Right ventricle myocardium superior (tissue), 1 donor: ENCODE measurements at regions of chr9 and their contacts with region 1.

Region 1: GRCh38 chr9:126690431-126691350 is 77.0 kb downstream of the LMX1B start:
- DNase-seq: peak; percentile 71
- ATAC-seq: peak; percentile 67

Region 2: GRCh38 chr9:126500684-126501382 is 189.9 kb before region 1 on chr9:
- intact Hi-C with region 1: loop called (anchors 10 kb)
- DNase-seq: peak; percentile 86
- ATAC-seq: peak; percentile 88

Region 3: DNA sequence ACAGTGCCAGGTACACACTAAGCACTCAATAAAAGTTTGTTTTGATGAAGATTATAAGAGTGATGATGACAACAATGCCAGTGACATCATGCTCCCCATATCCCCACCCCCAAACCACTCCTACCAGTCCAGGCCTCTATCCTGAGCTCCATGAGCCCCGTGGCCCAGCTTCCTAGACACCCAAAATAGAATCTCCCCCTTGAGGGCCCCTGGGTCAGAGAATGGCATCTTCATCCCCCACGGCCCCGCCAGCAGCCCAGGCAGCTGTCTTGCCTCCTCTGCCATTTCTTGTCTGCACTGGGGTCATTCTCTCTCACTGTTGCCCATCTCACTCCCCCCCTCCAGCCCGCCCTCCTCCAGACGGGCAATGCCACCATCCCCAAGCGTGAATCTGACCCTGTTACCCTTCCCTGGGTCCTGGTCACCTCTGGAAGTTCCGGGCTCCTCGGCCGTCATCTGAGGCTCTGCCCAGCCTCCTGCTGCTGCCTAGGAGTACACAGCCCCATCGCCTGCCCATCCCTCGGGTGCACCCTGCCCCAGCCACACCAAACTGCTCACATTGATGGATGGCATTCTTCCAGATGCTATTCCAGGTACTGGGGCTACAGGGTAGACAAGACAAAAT is 153.7 kb before region 1 on chr9:
- intact Hi-C with region 1: no loop called
- DNase-seq: peak; percentile 10
- ATAC-seq: no peak

Region 4: DNA sequence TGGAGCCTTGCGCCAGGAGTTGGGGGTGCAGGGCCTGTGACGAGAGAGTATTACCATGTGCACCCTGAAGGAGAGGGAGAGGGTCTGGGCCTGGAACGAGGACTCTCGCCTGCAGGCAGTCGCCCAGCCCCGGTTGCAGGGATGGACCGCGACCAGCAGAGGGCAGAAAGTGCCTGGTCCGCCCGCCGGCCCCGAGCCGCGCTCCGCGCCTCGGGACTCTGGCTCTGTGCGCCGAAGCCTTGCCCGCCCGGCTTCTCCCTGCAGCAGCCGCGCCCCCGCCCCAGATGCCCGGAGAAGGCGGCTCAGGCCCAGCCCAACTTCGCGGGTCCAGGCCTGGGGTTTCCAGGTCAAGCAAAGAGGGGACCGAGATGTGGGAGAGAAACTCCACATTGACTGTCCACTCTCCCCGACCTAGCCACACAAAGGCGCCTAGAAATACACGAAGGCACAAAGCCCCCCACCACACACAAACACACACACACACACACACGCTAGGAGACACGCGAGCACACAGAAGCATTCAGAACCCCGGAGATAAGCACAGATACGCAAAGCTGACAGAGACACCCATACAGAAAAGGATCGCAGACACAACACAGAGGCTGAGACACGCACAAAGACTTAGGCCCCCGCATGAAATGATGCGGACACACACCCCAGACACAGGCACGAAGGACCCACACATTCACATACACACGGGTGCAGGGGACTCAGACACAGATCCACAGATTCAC is 78.9 kb before region 1 on chr9:
- intact Hi-C with region 1: loop called (anchors 5 kb)
- DNase-seq: peak; percentile 85
- ATAC-seq: peak; percentile 93